CD8-positive, alpha-beta T cell (primary cell): ENCODE measurements at regions of chr2 and their contacts with region 1.

Region 1: DNA sequence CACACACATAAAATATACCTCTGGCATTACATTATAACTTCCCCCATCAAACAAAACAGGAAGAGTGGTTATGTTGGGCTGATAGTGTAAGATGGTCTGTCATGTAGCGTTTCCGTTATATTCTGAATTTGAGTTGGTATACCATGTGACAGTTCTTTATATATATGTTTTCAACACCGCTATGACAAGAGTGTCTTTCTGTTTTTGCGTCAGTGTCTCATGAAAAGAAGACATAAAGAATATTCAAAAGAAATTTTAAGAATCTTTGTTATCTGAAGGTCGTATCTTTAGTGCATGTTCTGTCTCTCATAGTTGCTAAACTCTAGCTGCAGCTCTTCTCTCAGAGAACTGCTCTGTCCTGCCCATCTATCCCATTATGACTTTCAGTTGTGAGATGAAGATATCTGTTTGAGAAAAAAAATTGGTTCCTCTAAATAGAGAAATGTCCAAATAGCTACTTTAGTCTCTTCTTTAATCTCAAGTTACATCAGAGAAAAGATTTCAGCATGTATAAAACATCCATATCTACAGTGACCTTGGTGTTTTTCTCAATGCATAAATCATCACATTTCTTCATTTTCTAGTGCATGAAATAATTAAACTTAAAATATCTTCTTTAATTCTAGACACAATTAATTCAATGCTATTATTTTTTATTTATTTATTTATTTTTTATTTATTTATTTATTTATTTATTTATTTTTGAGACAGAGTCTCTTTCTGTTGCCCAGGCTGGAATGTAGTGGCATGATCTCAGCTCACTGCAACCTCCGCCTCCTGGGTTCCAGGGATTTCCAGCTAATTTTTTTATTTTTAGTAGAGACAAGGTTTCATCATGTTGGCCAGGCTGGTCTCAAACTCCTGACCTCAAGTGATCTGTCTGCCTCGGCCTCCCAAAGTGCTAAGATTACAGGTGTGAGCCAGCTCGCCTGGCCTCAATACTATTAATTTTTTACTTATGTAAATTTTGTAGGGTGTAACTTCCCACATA is 24.3 kb upstream of the PSME4 start:
- DNase-seq: peak in 2 of 9 experiments; percentile 77 to 89
- ATAC-seq: peak; percentile 90
- H3K4me3 ChIP-seq: peak overlapping the region; percentile 19 to 44
- H3K4me3 Mint-ChIP-seq: peak overlapping the region; percentile 75
- H3K27ac ChIP-seq: peak overlapping the region; percentile 76 to 91
- H3K27ac Mint-ChIP-seq: peak overlapping the region; percentile 93
- H3K4me1 ChIP-seq: peaks cover 47% of the 10 kb centered on the region
- H3K4me1 Mint-ChIP-seq: peaks cover 33% of the 10 kb centered on the region
- H3K27me3 ChIP-seq: no peaks in the 10 kb centered on the region
- H3K27me3 Mint-ChIP-seq: no peaks in the 10 kb centered on the region
- CTCF ChIP-seq: no peak

Region 2: DNA sequence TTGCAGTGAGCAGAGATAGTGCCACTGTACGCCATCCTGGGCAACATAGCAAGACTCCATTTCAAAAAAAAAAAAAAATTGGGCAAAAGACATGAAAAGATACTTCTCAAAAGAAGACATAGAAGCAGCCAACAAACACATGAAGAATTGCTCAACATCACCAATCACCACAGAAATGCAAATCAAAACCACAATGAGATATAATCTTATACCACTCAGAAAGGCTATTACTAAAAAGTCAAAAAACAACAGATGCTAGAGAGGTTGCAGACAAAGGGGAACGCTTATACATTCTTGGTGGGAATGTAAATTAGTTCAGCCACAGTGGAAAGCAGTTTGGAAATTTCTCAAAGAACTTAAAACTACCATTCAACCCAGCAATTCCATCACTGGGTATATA is 270.6 kb before region 1 on chr2:
- CTCF ChIA-PET with region 1: no interaction called
- POLR2A ChIA-PET with region 1: no interaction called
- intact Hi-C with region 1: no loop called
- DNase-seq: no peak
- ATAC-seq: no peak
- H3K4me3 ChIP-seq: no peak overlapping the region
- H3K4me3 Mint-ChIP-seq: no peak overlapping the region
- H3K27ac ChIP-seq: no peak overlapping the region
- H3K27ac Mint-ChIP-seq: no peak overlapping the region
- H3K4me1 ChIP-seq: no peaks in the 10 kb centered on the region
- H3K4me1 Mint-ChIP-seq: peaks cover 24% of the 10 kb centered on the region
- H3K27me3 ChIP-seq: no peaks in the 10 kb centered on the region
- H3K27me3 Mint-ChIP-seq: no peaks in the 10 kb centered on the region
- CTCF ChIP-seq: no peak

Region 3: GRCh38 chr2:53854678-53855077 is 140.4 kb before region 1 on chr2:
- CTCF ChIA-PET with region 1: no interaction called
- POLR2A ChIA-PET with region 1: no interaction called
- intact Hi-C with region 1: no loop called
- DNase-seq: no peak
- ATAC-seq: no peak
- H3K4me3 ChIP-seq: no peak overlapping the region
- H3K4me3 Mint-ChIP-seq: no peak overlapping the region
- H3K27ac ChIP-seq: no peak overlapping the region
- H3K27ac Mint-ChIP-seq: no peak overlapping the region
- H3K4me1 ChIP-seq: no peaks in the 10 kb centered on the region
- H3K4me1 Mint-ChIP-seq: no peaks in the 10 kb centered on the region
- H3K27me3 ChIP-seq: no peaks in the 10 kb centered on the region
- H3K27me3 Mint-ChIP-seq: no peaks in the 10 kb centered on the region
- CTCF ChIP-seq: no peak

Region 4: GRCh38 chr2:53964257-53964952 is 30.7 kb before region 1 on chr2:
- CTCF ChIA-PET with region 1: no interaction called
- POLR2A ChIA-PET with region 1: interaction called, 3 read pairs
- intact Hi-C with region 1: loop called in 1 of 2 experiments (anchors 5 kb)
- DNase-seq: no peak
- ATAC-seq: no peak
- H3K4me3 ChIP-seq: no peak overlapping the region
- H3K4me3 Mint-ChIP-seq: no peak overlapping the region
- H3K27ac ChIP-seq: no peak overlapping the region
- H3K27ac Mint-ChIP-seq: no peak overlapping the region
- H3K4me1 ChIP-seq: peaks cover 38% of the 10 kb centered on the region
- H3K4me1 Mint-ChIP-seq: peaks cover 79% of the 10 kb centered on the region
- H3K27me3 ChIP-seq: no peaks in the 10 kb centered on the region
- H3K27me3 Mint-ChIP-seq: no peaks in the 10 kb centered on the region
- CTCF ChIP-seq: no peak

Region 5: DNA sequence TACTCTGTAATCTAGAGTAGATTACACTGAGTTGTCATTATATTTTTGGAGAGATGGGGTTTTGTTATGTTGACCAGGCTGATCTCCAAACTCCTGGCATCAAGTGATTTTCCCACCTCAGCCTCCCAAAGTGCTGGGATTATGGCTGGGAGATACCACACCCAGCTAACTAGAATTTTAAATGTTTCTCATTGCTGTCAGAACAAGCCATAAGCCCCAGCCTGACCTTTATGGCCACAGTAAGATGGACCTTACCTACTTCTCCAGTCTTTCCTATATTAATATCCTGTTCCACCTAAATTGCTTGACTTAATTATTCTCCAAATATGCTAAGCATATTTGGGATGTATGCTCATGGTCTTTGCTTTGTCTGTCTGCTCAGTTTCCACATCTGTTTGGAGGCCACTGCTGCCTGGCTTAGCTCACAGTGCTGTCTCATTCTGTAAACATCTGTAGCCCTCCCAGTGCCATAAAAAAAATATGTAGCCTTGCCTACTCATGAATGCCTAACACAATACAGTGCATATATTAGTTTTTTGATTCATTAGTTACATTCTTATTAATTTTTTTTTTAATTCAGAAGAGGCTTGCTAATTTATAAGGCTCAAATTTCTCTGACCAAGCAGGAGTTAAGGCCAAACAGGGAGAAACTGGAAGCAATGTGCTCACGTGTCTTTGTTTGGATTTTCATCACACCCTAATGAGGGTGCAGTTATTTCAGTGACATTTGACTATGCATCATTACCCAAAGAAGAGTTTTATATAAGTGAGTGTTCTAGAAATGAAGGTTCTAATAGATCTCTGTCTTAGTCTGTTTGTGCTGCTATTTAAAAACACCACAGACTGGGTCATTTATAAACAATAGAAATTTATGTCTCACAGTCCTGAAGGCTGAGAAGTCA is 20.9 kb after region 1 on chr2:
- CTCF ChIA-PET with region 1: no interaction called
- POLR2A ChIA-PET with region 1: interaction called, 3 read pairs
- intact Hi-C with region 1: loop called in 1 of 2 experiments (anchors 2 kb)
- DNase-seq: no peak
- ATAC-seq: no peak
- H3K4me3 ChIP-seq: no peak overlapping the region
- H3K4me3 Mint-ChIP-seq: no peak overlapping the region
- H3K27ac ChIP-seq: no peak overlapping the region
- H3K27ac Mint-ChIP-seq: peak overlapping the region; percentile 52
- H3K4me1 ChIP-seq: peaks cover 28% of the 10 kb centered on the region
- H3K4me1 Mint-ChIP-seq: peaks cover 37% of the 10 kb centered on the region
- H3K27me3 ChIP-seq: no peaks in the 10 kb centered on the region
- H3K27me3 Mint-ChIP-seq: no peaks in the 10 kb centered on the region
- CTCF ChIP-seq: no peak

Region 6: GRCh38 chr2:54041135-54041534 is 46.0 kb after region 1 on chr2:
- CTCF ChIA-PET with region 1: no interaction called
- POLR2A ChIA-PET with region 1: no interaction called
- intact Hi-C with region 1: loop called in 1 of 2 experiments (anchors 5 kb)
- DNase-seq: peak in 6 of 9 experiments; percentile 28 to 59 (median 40)
- ATAC-seq: peak; percentile 89
- H3K4me3 ChIP-seq: no peak overlapping the region
- H3K4me3 Mint-ChIP-seq: no peak overlapping the region
- H3K27ac ChIP-seq: peak overlapping the region in 1 of 2 experiments; percentile 52
- H3K27ac Mint-ChIP-seq: no peak overlapping the region
- H3K4me1 ChIP-seq: no peaks in the 10 kb centered on the region
- H3K4me1 Mint-ChIP-seq: no peaks in the 10 kb centered on the region
- H3K27me3 ChIP-seq: no peaks in the 10 kb centered on the region
- H3K27me3 Mint-ChIP-seq: no peaks in the 10 kb centered on the region
- CTCF ChIP-seq: no peak

Region 7: GRCh38 chr2:54741250-54741649 is 746.1 kb after region 1 on chr2:
- CTCF ChIA-PET with region 1: no interaction called
- POLR2A ChIA-PET with region 1: no interaction called
- intact Hi-C with region 1: no loop called
- DNase-seq: no peak
- ATAC-seq: no peak
- H3K4me3 ChIP-seq: no peak overlapping the region
- H3K4me3 Mint-ChIP-seq: no peak overlapping the region
- H3K27ac ChIP-seq: no peak overlapping the region
- H3K27ac Mint-ChIP-seq: no peak overlapping the region
- H3K4me1 ChIP-seq: no peaks in the 10 kb centered on the region
- H3K4me1 Mint-ChIP-seq: no peaks in the 10 kb centered on the region
- H3K27me3 ChIP-seq: no peaks in the 10 kb centered on the region
- H3K27me3 Mint-ChIP-seq: peaks cover 4% of the 10 kb centered on the region
- CTCF ChIP-seq: no peak